Activated T-helper 1 cell treated with anti-CD3 and anti-CD28 coated beads, Interleukin-12 subunit alpha, Interleukin-12 subunit beta, Interleukin-2, Interleukin-4 antibody, amounts not matched to agents 30 ng/mL and 10 ng/mL and 1 ng/mL, durations not matched to agents 14 hours and 24 hours and 36 hours (primary cell): ENCODE measurements at regions of chr2 and their contacts with region 1.

Region 1: GRCh38 chr2:7437716-7438632 is 520.8 kb downstream of the RNF144A start:
- DNase-seq: no peak
- H3K4me3 Mint-ChIP-seq: peak overlapping the region; percentile 54
- H3K27ac Mint-ChIP-seq: peak overlapping the region; percentile 88
- H3K4me1 Mint-ChIP-seq: peaks cover 86% of the 10 kb centered on the region
- H3K27me3 Mint-ChIP-seq: no peaks in the 10 kb centered on the region

Region 2: DNA sequence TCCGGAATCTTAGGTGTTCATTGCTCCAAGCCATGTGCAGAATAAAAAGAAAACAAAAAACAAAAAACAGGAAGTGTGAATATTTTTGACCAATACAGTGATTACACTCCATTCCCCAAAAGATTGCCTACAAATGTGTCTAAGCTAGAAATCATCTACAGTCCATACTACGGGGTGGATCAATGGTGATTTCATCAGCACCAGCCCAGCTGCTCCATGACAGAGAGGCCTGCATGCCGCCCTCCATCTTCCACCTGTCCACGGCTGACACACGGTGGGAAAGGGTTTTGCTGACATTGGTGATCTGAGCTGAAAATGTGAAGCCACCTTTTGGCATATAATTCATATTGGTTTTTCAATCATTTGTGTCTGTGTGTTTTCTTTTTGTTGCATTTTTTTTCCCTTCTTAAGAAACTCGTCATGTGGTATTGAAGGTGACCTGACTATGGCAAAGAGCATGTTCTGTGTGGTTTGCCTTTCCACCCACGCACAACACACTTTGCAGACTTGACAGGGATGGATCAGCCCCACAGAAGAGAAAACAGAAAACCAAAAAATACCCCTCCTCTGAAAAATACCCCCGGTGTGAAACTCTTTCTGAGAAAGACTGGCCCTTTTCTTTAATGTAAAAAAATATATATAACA is 12.3 kb after region 1 on chr2:
- intact Hi-C with region 1: loop called (anchors 1 kb)
- DNase-seq: peak; percentile 65
- H3K4me3 Mint-ChIP-seq: peak overlapping the region; percentile 9
- H3K27ac Mint-ChIP-seq: peak overlapping the region; percentile 98
- H3K4me1 Mint-ChIP-seq: peaks cover 90% of the 10 kb centered on the region
- H3K27me3 Mint-ChIP-seq: no peaks in the 10 kb centered on the region

Region 3: DNA sequence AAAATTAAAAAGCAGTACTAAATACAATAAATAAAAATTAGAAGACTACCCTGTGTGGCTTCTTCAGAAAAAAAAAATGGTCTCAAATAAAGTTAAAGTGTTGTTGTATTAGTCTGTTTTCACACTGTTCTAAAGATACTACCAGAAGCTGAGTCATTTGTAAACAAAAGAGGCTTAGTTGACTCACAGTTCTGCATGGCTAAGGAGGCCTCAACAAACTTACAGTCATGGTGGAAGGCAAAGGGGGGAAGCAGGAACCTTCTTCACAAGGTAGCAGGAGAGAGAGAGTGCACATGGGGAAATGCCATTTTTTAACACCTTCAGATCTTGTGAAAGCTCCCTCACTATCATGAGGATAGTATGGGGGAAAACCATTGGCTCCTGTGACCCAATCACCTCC is 92.0 kb after region 1 on chr2:
- intact Hi-C with region 1: loop called (anchors 1 kb)
- DNase-seq: no peak
- H3K4me3 Mint-ChIP-seq: no peak overlapping the region
- H3K27ac Mint-ChIP-seq: peak overlapping the region; percentile 71
- H3K4me1 Mint-ChIP-seq: peaks cover 64% of the 10 kb centered on the region
- H3K27me3 Mint-ChIP-seq: no peaks in the 10 kb centered on the region

Region 4: GRCh38 chr2:7692657-7693161 is 254.7 kb after region 1 on chr2:
- intact Hi-C with region 1: loop called (anchors 2 kb)
- DNase-seq: no peak
- H3K4me3 Mint-ChIP-seq: peak overlapping the region; percentile 48
- H3K27ac Mint-ChIP-seq: peak overlapping the region; percentile 94
- H3K4me1 Mint-ChIP-seq: peaks cover 51% of the 10 kb centered on the region
- H3K27me3 Mint-ChIP-seq: no peaks in the 10 kb centered on the region

Region 5: GRCh38 chr2:7930800-7931635 is 493.0 kb after region 1 on chr2:
- intact Hi-C with region 1: loop called (anchors 1 kb)
- DNase-seq: no peak
- H3K4me3 Mint-ChIP-seq: no peak overlapping the region
- H3K27ac Mint-ChIP-seq: peak overlapping the region; percentile 81
- H3K4me1 Mint-ChIP-seq: peaks cover 11% of the 10 kb centered on the region
- H3K27me3 Mint-ChIP-seq: no peaks in the 10 kb centered on the region

Region 6: DNA sequence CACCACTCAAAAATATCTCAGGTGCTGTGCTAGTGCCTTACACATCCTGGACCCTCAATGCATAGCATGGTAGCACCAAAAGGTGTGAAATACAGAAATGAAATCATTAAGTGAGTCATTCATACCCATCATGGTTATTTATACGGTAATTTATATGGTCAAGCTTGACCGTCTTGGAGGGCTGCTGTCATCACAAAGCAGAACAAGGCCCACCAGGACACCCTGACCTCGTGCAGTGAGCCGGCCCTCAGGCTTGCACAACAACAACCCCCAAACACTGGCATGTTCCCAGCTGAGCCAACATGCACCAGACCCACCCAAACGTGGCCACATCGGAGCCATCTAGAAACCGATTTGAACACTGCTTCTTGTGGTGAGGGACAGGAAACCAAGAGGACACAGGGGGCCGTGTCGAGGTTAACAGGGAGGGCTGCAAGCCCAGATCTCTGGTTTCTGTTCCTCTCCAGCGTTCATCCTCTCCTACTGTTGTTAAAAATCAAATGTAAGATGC is 865.4 kb after region 1 on chr2:
- intact Hi-C with region 1: loop called (anchors 5 kb)
- DNase-seq: peak; percentile 77
- H3K4me3 Mint-ChIP-seq: peak overlapping the region; percentile 65
- H3K27ac Mint-ChIP-seq: peak overlapping the region; percentile 85
- H3K4me1 Mint-ChIP-seq: peaks cover 91% of the 10 kb centered on the region
- H3K27me3 Mint-ChIP-seq: peaks cover 7% of the 10 kb centered on the region